ENCODE measurements at regions of chr1 and their contacts with region 1.

Region 1: GRCh38 chr1:11320153-11320936 is 47.3 kb downstream of the UBIAD1 start:
- DNase-seq: no peak
- H3K4me3 ChIP-seq: no peak overlapping the region
- H3K27ac ChIP-seq: no peak overlapping the region
- H3K4me1 ChIP-seq: peaks cover 18% of the 10 kb centered on the region
- H3K27me3 ChIP-seq: no peaks in the 10 kb centered on the region
- CTCF ChIP-seq: peak; percentile 34 to 51

Region 2: DNA sequence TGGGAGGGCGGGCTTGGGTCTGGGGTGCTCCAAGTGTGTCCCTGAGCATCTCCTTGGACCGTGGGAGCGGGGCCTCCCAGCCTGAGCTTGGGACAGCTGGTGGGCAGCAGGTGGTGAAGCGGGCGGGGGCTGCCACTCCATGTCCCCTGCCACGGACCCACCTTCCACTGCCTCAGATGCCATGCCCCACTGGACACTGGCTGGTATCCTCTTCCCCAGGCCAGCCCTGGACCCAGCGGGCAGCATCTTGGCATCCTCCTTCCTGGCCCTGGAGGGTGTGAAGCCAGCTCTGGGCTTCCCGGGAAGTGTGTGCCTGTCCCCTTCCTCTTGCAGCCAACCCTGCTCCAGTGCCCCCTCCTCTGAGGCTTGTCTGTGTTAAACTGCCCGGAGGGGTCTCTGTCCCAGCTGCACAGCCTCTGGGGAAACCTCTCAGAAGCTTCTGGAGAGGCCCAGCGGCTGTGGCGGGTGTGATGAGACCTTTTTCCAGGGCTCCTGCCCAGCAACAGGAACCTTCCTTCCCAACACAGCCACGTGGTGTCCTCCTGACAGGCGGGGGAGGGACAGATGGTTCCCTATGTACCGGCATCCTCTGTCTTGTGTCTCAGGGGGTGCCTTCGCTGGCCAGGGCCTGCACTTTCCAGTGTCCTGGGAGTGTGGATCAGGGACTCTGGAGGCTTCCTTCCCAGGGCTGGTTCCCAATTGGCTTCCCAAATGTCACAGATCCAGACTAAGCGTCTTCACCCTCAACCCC is 77.0 kb after region 1 on chr1:
- CTCF ChIA-PET with region 1: no interaction called
- dilution Hi-C with region 1: loop called (anchors 5 kb)
- in situ Hi-C with region 1: no loop called
- intact Hi-C with region 1: no loop called
- DNase-seq: no peak
- H3K4me3 ChIP-seq: no peak overlapping the region
- H3K27ac ChIP-seq: no peak overlapping the region
- H3K4me1 ChIP-seq: no peaks in the 10 kb centered on the region
- H3K27me3 ChIP-seq: peaks cover 2% of the 10 kb centered on the region
- CTCF ChIP-seq: no peak

Region 3: DNA sequence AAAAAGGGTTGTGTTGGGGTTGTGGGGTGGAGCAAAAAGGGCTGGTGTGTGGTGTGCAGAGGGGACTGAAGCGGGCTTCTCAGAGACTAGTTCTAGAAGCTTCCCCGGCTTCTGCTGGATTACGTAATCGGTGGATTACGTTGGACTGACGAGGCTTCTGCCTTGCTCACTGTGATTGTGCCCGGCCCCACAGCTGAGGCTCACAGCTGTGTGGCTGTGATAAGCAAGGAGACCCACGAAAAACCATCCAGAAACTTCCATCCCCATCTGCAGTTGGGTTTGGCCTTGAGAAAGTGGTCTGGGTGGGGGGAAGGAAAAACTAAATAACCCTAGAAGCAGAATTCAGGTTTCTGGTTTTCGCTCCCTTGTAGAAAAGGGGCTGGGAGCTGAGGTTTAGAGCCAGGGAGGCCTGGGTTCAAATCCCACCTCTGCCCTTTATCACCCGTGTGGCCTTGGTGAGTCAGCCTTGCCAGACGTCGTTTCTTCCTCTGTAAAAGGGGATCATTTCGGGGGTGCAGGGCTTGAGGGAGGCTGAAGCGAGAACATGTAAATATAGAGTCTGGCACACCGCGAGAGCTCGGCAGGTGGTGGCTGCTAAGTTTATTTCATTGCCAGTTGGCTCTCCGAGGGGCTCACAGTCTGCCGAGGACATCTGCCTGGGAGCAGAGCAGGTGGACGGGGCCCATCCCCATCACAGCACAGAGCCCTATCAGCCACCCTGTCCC is 128.2 kb after region 1 on chr1:
- CTCF ChIA-PET with region 1: no interaction called
- dilution Hi-C with region 1: no loop called
- in situ Hi-C with region 1: no loop called
- intact Hi-C with region 1: no loop called
- DNase-seq: no peak
- H3K4me3 ChIP-seq: no peak overlapping the region
- H3K27ac ChIP-seq: no peak overlapping the region
- H3K4me1 ChIP-seq: no peaks in the 10 kb centered on the region
- H3K27me3 ChIP-seq: no peaks in the 10 kb centered on the region
- CTCF ChIP-seq: no peak